ENCODE measurements at regions of chr22 and their contacts with region 1.

Region 1: GRCh38 chr22:49670456-49671330 is 157.0 kb downstream of the BRD1 start:
- DNase-seq: no peak
- H3K4me3 ChIP-seq: peak overlapping the region in 1 of 2 donors; percentile 43
- H3K4me3 Mint-ChIP-seq: peak overlapping the region; percentile 71 to 84 (median 76)
- H3K27ac ChIP-seq: no peak overlapping the region
- H3K27ac Mint-ChIP-seq: peak overlapping the region in 2 of 7 donors; percentile 32 to 72
- H3K4me1 ChIP-seq: peaks cover 20% of the 10 kb centered on the region
- H3K4me1 Mint-ChIP-seq: peaks cover 16 to 38% (median 28%) of the 10 kb centered on the region in 4 donors
- H3K27me3 ChIP-seq: peaks cover 11% of the 10 kb centered on the region
- H3K27me3 Mint-ChIP-seq: peaks cover 11 to 21% of the 10 kb centered on the region in 2 donors

Region 2: GRCh38 chr22:49657275-49657975 is 13.3 kb before region 1 on chr22:
- CTCF ChIA-PET with region 1: no interaction called
- POLR2A ChIA-PET with region 1: interaction called, 10 read pairs
- intact Hi-C with region 1: no loop called
- DNase-seq: peak; percentile 64 to 82 (median 70)
- H3K4me3 ChIP-seq: peak overlapping the region; percentile 79 to 85
- H3K4me3 Mint-ChIP-seq: peak overlapping the region; percentile 85 to 100 (median 97)
- H3K27ac ChIP-seq: peak overlapping the region; percentile 34
- H3K27ac Mint-ChIP-seq: peak overlapping the region; percentile 58 to 95 (median 94)
- H3K4me1 ChIP-seq: peaks cover 29% of the 10 kb centered on the region
- H3K4me1 Mint-ChIP-seq: peaks cover 15 to 32% (median 24%) of the 10 kb centered on the region in 4 donors
- H3K27me3 ChIP-seq: no peaks in the 10 kb centered on the region
- H3K27me3 Mint-ChIP-seq: no peaks in the 10 kb centered on the region